ENCODE measurements at regions of chr20 and their contacts with region 1.

Region 1: DNA sequence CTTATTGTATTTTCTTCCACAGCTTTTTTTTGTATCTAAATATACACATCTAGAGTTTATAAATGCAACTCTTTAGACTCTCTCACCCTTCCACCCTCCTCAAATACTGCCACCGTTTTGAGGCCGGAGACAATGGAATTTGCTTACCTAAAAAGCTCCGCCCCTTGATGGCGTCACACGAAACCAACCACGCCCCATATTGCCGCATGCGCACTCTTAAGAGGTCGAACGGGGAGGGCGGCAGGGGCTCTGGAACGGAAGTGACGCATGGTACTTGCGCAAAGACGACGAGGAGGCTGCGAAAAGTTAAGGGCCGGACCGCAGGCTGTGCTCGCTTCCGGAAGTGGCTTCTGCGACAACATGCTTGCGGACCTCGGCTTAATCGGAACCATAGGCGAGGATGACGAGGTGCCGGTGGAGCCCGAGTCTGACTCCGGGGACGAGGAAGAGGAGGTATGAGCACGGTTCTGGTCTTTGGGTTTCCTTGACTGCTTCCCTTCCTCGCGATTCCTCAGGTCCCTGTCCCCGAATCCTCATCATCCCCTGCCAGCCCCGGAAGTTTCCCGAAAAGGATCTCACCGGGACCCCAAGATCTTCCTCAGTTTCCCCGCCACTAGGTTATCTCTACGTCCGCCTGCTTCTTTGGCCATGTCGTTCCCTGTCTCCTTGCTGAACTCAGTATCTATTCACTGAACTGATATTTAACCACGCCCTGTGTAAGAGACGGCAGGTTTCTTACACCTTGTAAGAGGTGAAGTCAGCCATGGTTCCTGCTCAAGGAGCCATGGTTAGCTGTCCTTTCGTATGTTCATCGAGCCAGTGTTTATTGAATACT is at the start of gene DDX27:
- DNase-seq: peak; percentile 98
- H3K4me3 Mint-ChIP-seq: peak within 1 kb of the TSS; percentile 88
- H3K27ac Mint-ChIP-seq: peak within 1 kb of the TSS; percentile 93
- H3K4me1 Mint-ChIP-seq: peaks cover 24% of the 10 kb centered on the region
- H3K27me3 Mint-ChIP-seq: no peaks in the 10 kb centered on the region
- total RNA-seq, gene DDX27: 32.5 to 34.2 TPM

Region 2: GRCh38 chr20:49046087-49046900 is 173.0 kb before region 1 on chr20 and contains the start of gene CSE1L:
- CTCF ChIA-PET with region 1: interaction called, 5 read pairs
- POLR2A ChIA-PET with region 1: interaction called, 11 read pairs
- DNase-seq: peak; percentile 95
- H3K4me3 Mint-ChIP-seq: peak within 1 kb of the TSS; percentile 99
- H3K27ac Mint-ChIP-seq: peak within 1 kb of the TSS; percentile 98
- H3K4me1 Mint-ChIP-seq: peaks cover 38% of the 10 kb centered on the region
- H3K27me3 Mint-ChIP-seq: no peaks in the 10 kb centered on the region
- total RNA-seq, gene CSE1L: 65.6 to 67.8 TPM

Region 3: GRCh38 chr20:49132995-49133478 is 86.3 kb before region 1 on chr20:
- CTCF ChIA-PET with region 1: interaction called, 156 read pairs
- POLR2A ChIA-PET with region 1: interaction called, 8 read pairs
- DNase-seq: no peak
- H3K4me3 Mint-ChIP-seq: no peak overlapping the region
- H3K27ac Mint-ChIP-seq: no peak overlapping the region
- H3K4me1 Mint-ChIP-seq: peaks cover 7% of the 10 kb centered on the region
- H3K27me3 Mint-ChIP-seq: no peaks in the 10 kb centered on the region

Region 4: GRCh38 chr20:49166534-49167449 is 52.5 kb before region 1 on chr20:
- CTCF ChIA-PET with region 1: interaction called, 32 read pairs
- POLR2A ChIA-PET with region 1: no interaction called
- DNase-seq: no peak
- H3K4me3 Mint-ChIP-seq: peak overlapping the region; percentile 46
- H3K27ac Mint-ChIP-seq: peak overlapping the region; percentile 64
- H3K4me1 Mint-ChIP-seq: peaks cover 51% of the 10 kb centered on the region
- H3K27me3 Mint-ChIP-seq: no peaks in the 10 kb centered on the region

Region 5: GRCh38 chr20:49186535-49187329 is 32.6 kb before region 1 on chr20:
- CTCF ChIA-PET with region 1: interaction called, 32 read pairs
- POLR2A ChIA-PET with region 1: interaction called, 11 read pairs
- DNase-seq: peak; percentile 73
- H3K4me3 Mint-ChIP-seq: peak overlapping the region; percentile 90
- H3K27ac Mint-ChIP-seq: peak overlapping the region; percentile 81
- H3K4me1 Mint-ChIP-seq: peaks cover 48% of the 10 kb centered on the region
- H3K27me3 Mint-ChIP-seq: peaks cover 7% of the 10 kb centered on the region

Region 6: DNA sequence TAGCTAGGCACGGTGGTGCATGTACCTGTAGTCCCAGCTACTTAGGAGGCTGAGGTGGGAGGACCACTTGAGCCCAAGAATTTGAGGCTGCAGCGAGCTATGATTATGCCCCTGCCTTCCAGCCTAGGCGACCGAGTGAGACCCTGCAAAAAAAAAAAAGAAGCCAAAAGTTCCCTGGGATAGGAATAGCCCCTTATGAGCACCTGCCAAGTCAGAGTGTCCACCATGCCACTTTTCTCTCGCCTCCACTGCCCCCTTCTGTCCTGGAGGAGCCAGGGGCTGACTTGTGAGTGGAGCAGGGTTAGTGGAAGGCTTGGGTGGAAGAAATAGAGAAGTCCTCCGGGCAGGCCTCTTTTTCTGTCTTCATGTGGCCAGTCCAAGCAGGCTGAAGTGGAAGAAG is 12.2 kb before region 1 on chr20:
- CTCF ChIA-PET with region 1: interaction called, 22 read pairs
- POLR2A ChIA-PET with region 1: no interaction called
- DNase-seq: no peak
- H3K4me3 Mint-ChIP-seq: no peak overlapping the region
- H3K27ac Mint-ChIP-seq: no peak overlapping the region
- H3K4me1 Mint-ChIP-seq: no peaks in the 10 kb centered on the region
- H3K27me3 Mint-ChIP-seq: no peaks in the 10 kb centered on the region